ENCODE measurements at regions of chr2 and their contacts with region 1.

Region 1: DNA sequence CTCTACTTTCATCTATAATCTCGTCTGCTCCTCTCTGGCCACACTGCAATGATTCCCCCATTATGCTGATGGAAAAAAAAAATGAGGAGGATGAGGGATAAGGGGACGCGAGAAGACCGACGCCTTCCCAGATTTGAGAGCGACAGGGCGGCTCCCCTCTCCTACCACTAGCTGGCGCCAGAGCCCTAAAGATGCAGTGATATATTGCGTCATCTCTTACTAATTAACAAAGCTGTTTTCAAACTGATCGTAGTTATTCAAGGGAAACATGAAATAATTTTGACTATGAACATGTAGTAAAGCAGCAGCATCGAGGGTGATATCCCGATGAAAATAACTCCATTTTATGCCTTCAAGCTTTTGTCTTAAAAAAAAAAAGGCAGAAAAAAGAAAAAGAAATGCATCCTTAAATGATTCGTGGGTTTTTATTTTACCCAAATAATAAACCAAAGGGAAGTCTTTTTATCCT is 48.0 kb upstream of the HNRNPA3 start:
- DNase-seq: peak; percentile 65
- ATAC-seq: peak; percentile 56
- H3K4me3 Mint-ChIP-seq: no peak overlapping the region
- H3K27ac Mint-ChIP-seq: no peak overlapping the region
- H3K4me1 Mint-ChIP-seq: peaks cover 5% of the 10 kb centered on the region
- H3K27me3 Mint-ChIP-seq: peaks cover 2% of the 10 kb centered on the region
- CTCF ChIP-seq: peak; percentile 89

Region 2: GRCh38 chr2:176126929-176127773 is 1037.5 kb before region 1 on chr2:
- CTCF ChIA-PET with region 1: interaction called, 3 read pairs
- POLR2A ChIA-PET with region 1: no interaction called
- intact Hi-C with region 1: loop called (anchors 1 kb)
- DNase-seq: peak; percentile 42
- ATAC-seq: no peak
- H3K4me3 Mint-ChIP-seq: no peak overlapping the region
- H3K27ac Mint-ChIP-seq: no peak overlapping the region
- H3K4me1 Mint-ChIP-seq: peaks cover 32% of the 10 kb centered on the region
- H3K27me3 Mint-ChIP-seq: peaks cover 63% of the 10 kb centered on the region
- CTCF ChIP-seq: peak; percentile 61

Region 3: GRCh38 chr2:177212106-177212890 is 47.7 kb after region 1 on chr2 and contains the start of gene HNRNPA3:
- CTCF ChIA-PET with region 1: interaction called, 25 read pairs
- POLR2A ChIA-PET with region 1: interaction called, 89 read pairs
- intact Hi-C with region 1: loop called (anchors 1 kb)
- DNase-seq: peak; percentile 100
- ATAC-seq: peak; percentile 86
- H3K4me3 Mint-ChIP-seq: peak within 1 kb of the TSS; percentile 95
- H3K27ac Mint-ChIP-seq: peak within 1 kb of the TSS; percentile 100
- H3K4me1 Mint-ChIP-seq: peaks cover 48% of the 10 kb centered on the region
- H3K27me3 Mint-ChIP-seq: no peaks in the 10 kb centered on the region
- CTCF ChIP-seq: no peak
- total RNA-seq, gene HNRNPA3: 254 and 275 TPM in 2 replicates

Region 4: DNA sequence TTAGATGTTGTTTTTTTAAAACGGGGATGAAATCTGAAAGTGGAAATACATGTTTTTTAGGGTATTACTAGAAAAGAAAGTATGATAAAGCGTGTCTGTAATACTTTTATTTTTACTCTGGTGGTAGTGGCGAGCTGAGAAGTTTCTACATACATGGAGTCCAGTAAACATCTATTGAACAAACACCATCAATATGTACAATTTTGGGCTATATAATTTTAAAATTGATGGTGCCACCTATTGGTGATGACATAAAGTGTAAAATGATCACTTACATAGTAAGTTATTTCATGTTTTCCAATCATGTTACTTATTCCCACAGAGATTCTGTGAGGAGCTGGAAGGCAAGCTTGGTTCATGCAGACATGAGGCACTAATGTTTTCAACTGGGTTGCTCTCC is 131.4 kb after region 1 on chr2:
- CTCF ChIA-PET with region 1: interaction called, 103 read pairs
- POLR2A ChIA-PET with region 1: interaction called, 11 read pairs
- intact Hi-C with region 1: loop called (anchors 1 kb)
- DNase-seq: no peak
- ATAC-seq: peak; percentile 57
- H3K4me3 Mint-ChIP-seq: no peak overlapping the region
- H3K27ac Mint-ChIP-seq: peak overlapping the region; percentile 8
- H3K4me1 Mint-ChIP-seq: peaks cover 3% of the 10 kb centered on the region
- H3K27me3 Mint-ChIP-seq: no peaks in the 10 kb centered on the region
- CTCF ChIP-seq: no peak

Region 5: GRCh38 chr2:177413703-177414102 is 249.1 kb after region 1 on chr2:
- CTCF ChIA-PET with region 1: interaction called, 47 read pairs
- POLR2A ChIA-PET with region 1: no interaction called
- intact Hi-C with region 1: loop called (anchors 1 kb)
- DNase-seq: no peak
- ATAC-seq: no peak
- H3K4me3 Mint-ChIP-seq: no peak overlapping the region
- H3K27ac Mint-ChIP-seq: no peak overlapping the region
- H3K4me1 Mint-ChIP-seq: peaks cover 1% of the 10 kb centered on the region
- H3K27me3 Mint-ChIP-seq: no peaks in the 10 kb centered on the region
- CTCF ChIP-seq: no peak

Region 6: GRCh38 chr2:177445200-177445599 is 280.6 kb after region 1 on chr2:
- CTCF ChIA-PET with region 1: no interaction called
- POLR2A ChIA-PET with region 1: no interaction called
- intact Hi-C with region 1: no loop called
- DNase-seq: no peak
- ATAC-seq: no peak
- H3K4me3 Mint-ChIP-seq: no peak overlapping the region
- H3K27ac Mint-ChIP-seq: no peak overlapping the region
- H3K4me1 Mint-ChIP-seq: no peaks in the 10 kb centered on the region
- H3K27me3 Mint-ChIP-seq: no peaks in the 10 kb centered on the region
- CTCF ChIP-seq: no peak

Region 7: GRCh38 chr2:177552422-177553175 is 388.0 kb after region 1 on chr2:
- CTCF ChIA-PET with region 1: no interaction called
- POLR2A ChIA-PET with region 1: no interaction called
- intact Hi-C with region 1: loop called (anchors 1 kb)
- DNase-seq: peak; percentile 87
- ATAC-seq: peak; percentile 90
- H3K4me3 Mint-ChIP-seq: peak overlapping the region; percentile 96
- H3K27ac Mint-ChIP-seq: peak overlapping the region; percentile 100
- H3K4me1 Mint-ChIP-seq: peaks cover 17% of the 10 kb centered on the region
- H3K27me3 Mint-ChIP-seq: no peaks in the 10 kb centered on the region
- CTCF ChIP-seq: no peak

Region 8: DNA sequence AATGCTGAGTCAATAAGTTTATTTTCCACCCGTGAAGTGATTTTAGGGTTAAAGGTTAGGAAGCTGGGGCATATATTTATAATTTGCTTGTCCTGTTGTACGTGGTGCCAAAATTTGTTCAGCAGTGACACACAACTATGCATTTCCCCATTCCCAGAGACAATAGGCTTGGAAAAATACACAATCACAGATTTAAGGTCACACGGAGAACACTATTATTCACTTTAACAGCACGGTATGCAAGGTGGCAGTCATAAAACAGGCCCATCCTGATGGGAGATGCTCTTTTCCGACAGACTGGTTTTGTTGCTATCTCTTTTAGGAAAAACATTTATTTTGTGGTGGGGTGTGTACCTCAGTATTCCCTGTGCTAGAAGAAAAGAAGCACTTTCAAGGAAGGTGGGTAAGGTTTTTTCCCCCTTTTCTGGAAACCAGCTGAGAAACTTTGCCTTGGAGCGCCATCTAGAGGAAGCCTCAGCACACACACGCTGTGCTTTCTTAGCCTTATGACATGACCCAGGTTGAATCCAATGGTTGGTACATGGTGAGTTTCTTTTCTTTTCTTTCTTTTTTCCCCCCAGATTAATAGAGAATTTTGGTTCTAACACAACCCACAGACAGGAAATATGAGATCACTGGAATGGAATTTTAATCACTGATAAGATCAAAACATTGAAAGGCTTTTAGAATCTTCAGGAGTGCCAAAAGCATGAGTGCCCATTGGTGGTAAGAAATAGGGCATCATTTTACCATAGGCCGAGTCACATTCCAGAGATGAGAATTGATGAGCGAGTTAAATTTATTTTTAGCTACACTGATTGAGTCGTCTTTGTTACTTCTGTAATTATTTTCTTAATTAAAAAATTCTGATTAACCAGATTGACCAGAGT is 560.0 kb after region 1 on chr2:
- CTCF ChIA-PET with region 1: interaction called, 6 read pairs
- POLR2A ChIA-PET with region 1: interaction called, 8 read pairs
- intact Hi-C with region 1: loop called (anchors 1 kb)
- DNase-seq: no peak
- ATAC-seq: peak; percentile 60
- H3K4me3 Mint-ChIP-seq: no peak overlapping the region
- H3K27ac Mint-ChIP-seq: no peak overlapping the region
- H3K4me1 Mint-ChIP-seq: no peaks in the 10 kb centered on the region
- H3K27me3 Mint-ChIP-seq: peaks cover 14% of the 10 kb centered on the region
- CTCF ChIP-seq: peak; percentile 45

Measured in activated B cell treated with CpG ODN at 0.5 μM for 24 hours (primary cell).